ENCODE measurements at regions of chr3 and their contacts with region 1.

Region 1: GRCh38 chr3:142844339-142844977 is 44.4 kb downstream of the PCOLCE2 start:
- DNase-seq: no peak
- ATAC-seq: peak; percentile 72
- H3K4me3 Mint-ChIP-seq: no peak overlapping the region
- H3K27ac Mint-ChIP-seq: no peak overlapping the region
- H3K4me1 Mint-ChIP-seq: peaks cover 5% of the 10 kb centered on the region
- H3K27me3 Mint-ChIP-seq: no peaks in the 10 kb centered on the region
- CTCF ChIP-seq: no peak

Region 2: DNA sequence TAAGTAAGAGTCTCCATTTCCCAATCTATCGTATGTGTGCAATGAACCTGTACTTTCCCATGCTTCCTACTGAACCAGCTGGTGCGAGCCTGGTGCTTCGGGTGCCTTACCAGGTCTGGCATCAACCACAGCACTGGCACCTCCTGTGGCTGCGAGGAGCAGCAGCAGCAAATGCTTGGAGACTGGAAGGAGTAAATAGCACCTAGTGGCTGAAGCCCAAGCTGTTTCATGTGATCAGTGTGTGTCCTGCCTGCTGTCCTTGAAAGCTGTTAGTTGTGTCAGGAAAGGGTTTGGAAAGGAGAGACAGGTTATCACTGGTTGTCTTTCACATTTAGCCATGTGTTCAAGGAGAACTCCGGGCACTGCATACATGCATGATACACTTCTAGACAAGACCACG is 12.6 kb after region 1 on chr3:
- CTCF ChIA-PET with region 1: interaction called, 12 read pairs
- POLR2A ChIA-PET with region 1: no interaction called
- DNase-seq: peak; percentile 56
- ATAC-seq: peak; percentile 91
- H3K4me3 Mint-ChIP-seq: no peak overlapping the region
- H3K27ac Mint-ChIP-seq: no peak overlapping the region
- H3K4me1 Mint-ChIP-seq: peaks cover 61% of the 10 kb centered on the region
- H3K27me3 Mint-ChIP-seq: no peaks in the 10 kb centered on the region; the same call in 1 of the 2 replicates
- CTCF ChIP-seq: no peak

Measured in WTC11 (cell line).